Esophagus squamous epithelium (tissue), 5 donors: ENCODE measurements at regions of chr12 and their contacts with region 1.

Region 1: GRCh38 chr12:113048716-113049127 is 7.8 kb upstream of the DTX1 start:
- DNase-seq: no peak
- H3K4me3 ChIP-seq: no peak overlapping the region
- H3K27ac ChIP-seq: no peak overlapping the region
- H3K4me1 ChIP-seq: no peaks in the 10 kb centered on the region
- H3K27me3 ChIP-seq: peaks cover 0 to 76% (median 0%) of the 10 kb centered on the region in 4 donors
- CTCF ChIP-seq: peak; percentile 75 to 86 (median 84)
- POLR2A ChIP-seq: no peak

Region 2: DNA sequence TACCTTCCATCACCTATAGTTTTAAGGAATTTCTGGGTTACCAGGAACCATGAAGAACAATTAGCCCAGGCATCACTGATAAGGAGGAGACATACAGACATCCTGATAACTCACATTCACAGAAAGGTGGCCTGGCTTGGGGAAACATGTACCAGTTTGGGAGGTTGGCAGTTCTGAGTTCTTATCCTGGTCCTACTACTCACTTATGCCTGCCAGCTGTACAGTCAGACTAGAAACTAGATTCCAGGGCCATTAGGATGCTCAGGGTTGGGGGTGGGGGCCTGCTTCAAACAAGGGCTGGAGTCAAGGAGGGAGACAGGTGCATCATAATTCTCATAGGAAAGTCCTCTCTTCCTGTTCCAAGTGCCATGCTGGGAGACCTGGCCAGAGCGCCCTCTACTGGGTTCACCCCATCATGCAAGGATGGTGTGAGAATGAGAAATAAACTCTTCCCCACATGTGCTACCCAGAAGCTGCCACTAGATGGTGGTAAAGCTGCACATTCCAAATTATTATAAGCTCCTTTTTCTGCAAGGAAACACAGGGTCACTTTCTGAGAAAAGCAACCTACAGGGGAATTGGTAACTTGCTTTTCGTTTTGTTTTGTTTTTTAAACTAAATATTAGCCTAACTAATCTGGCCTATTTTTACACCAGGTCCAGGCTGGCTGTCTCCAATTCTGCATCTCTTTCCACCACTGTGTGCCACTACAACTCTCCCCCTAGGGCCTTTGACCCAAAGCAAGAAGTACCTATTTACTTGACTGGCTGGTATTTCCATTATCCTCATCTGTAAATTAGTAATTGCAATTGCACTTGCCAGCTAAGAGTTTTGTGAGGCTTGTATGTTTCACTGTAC is 56.0 kb before region 1 on chr12:
- intact Hi-C with region 1: no loop called
- DNase-seq: no peak
- H3K4me3 ChIP-seq: no peak overlapping the region
- H3K27ac ChIP-seq: no peak overlapping the region
- H3K4me1 ChIP-seq: no peaks in the 10 kb centered on the region
- H3K27me3 ChIP-seq: no peaks in the 10 kb centered on the region
- CTCF ChIP-seq: peak; percentile 68 to 98 (median 82)
- POLR2A ChIP-seq: no peak

Region 3: DNA sequence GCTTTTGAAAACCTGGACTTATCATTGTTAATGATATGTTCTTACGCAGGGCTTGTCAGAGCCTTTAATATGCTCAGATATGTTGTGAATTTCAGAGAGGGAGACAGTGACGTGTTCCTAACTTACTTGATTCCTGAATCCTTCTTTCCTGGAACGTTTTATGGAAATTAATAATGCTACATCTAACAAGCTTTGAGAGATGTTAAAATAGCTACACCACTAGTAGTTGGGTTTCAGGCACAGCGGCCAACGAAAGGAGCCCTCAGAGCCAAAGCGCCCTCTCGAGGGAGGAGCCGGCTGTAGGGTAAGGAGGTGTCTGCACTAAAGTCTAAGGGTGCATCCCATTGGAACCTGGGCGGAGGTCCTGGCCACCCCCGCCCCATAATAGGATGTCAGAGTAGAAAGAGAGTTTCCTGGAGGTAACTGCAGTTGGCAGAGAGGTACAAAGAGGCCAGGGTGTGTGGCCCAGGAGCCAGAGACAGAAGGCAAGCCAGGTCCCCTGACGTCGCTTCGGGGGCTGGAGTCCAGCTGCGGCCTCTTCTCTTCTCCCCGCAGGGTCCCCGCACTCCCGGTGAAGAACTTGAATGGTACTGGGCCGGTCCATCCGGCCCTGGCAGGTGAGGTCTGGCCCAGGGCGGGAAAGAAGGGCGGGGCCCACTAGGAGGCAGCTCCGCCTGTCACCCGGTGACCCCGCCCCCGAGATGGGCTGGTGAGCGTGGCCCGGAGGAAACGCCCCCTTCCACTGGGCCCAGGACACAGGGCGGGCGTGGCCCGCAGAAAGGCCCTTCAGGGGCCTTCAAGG is 44.1 kb after region 1 on chr12:
- intact Hi-C with region 1: loop called (anchors 5 kb)
- DNase-seq: no peak
- H3K4me3 ChIP-seq: peak overlapping the region in 1 of 4 donors; percentile 1
- H3K27ac ChIP-seq: no peak overlapping the region
- H3K4me1 ChIP-seq: peaks cover 0 to 14% (median 0%) of the 10 kb centered on the region in 3 donors
- H3K27me3 ChIP-seq: peaks cover 0 to 53% (median 0%) of the 10 kb centered on the region in 4 donors
- CTCF ChIP-seq: no peak
- POLR2A ChIP-seq: no peak

Region 4: DNA sequence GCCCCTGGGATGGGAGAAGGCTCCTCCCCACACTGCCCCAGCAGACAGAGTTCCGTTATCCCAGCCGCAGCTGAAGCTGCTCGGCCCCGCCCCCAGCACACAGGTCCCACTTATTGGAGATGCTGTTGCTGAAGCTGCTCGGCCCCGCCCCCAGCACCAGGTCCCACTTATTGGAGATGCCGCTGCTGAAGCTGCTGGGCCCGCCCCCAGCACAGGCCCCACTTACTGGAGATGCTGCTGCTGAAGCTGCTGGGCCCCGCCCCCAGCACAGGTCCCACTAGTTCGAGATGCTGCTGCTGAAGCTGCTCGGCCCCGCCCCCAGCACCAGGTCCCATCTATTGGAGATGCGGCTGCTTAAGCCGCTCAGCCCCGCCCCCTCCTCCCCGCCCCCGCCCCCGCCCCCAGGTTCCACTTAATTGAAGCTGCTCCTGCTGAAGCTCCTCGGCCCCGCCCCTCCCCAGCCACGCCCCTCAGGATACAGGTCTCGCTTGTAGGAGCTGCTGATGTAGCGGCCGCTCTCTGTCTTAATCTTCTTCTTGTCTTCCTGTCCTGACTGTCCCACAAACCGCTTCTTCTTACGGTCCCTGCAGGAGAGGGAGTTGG is 112.8 kb after region 1 on chr12:
- intact Hi-C with region 1: loop called (anchors 5 kb)
- DNase-seq: no peak
- H3K4me3 ChIP-seq: no peak overlapping the region
- H3K27ac ChIP-seq: no peak overlapping the region
- H3K4me1 ChIP-seq: no peaks in the 10 kb centered on the region
- H3K27me3 ChIP-seq: no peaks in the 10 kb centered on the region
- CTCF ChIP-seq: no peak
- POLR2A ChIP-seq: no peak

Region 5: GRCh38 chr12:113174461-113175384 is 126.0 kb after region 1 on chr12:
- intact Hi-C with region 1: loop called (anchors 5 kb)
- DNase-seq: no peak
- H3K4me3 ChIP-seq: no peak overlapping the region
- H3K27ac ChIP-seq: no peak overlapping the region
- H3K4me1 ChIP-seq: no peaks in the 10 kb centered on the region
- H3K27me3 ChIP-seq: no peaks in the 10 kb centered on the region
- CTCF ChIP-seq: peak; percentile 89 to 100 (median 94)
- POLR2A ChIP-seq: no peak